ENCODE measurements at regions of chr19 and their contacts with region 1.

Region 1: DNA sequence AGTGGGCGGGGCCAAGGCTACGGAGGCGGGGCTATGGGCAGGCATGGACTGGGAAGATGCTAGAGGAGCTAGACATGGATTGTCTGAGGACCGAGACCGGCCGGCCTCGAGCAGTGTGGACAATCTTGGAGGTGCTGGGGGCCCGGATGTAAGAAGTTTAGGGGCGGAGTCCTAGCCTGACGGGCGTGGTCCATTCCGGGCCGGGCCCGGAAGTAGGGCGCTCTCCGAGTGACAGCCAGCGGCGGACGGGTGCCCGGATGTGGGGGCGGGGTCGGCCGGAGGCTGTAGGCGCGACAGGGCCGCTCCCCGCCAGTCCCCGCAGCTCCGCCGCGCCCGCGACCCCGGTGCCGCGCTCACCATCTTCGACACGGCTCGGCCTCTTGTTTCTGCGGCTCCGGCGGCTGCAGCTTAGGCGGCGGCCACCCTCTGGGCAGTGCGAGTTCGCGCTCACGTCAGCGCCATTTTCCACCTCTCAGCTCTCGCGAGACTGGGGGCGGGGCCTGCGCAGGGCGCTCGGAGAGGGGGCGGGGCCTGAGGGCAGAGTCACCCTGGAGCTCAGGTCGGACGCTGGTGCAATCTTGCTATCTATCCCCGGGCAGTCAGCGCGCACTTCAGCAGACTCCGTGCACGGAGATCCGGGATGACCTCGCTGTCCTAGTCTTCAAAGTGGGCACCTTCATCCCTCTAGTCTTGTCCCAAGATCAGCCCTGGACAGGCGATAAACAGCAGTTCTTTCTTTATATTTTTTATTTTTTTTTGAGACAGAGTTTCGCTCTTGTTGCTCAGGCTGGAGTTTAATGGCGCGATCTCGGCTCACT is at the start of gene ZNF414:
- DNase-seq: peak; percentile 99
- ATAC-seq: peak; percentile 81
- H3K4me3 Mint-ChIP-seq: peak within 1 kb of the TSS; percentile 81
- H3K27ac Mint-ChIP-seq: peak within 1 kb of the TSS; percentile 97
- H3K4me1 Mint-ChIP-seq: peaks cover 55% of the 10 kb centered on the region
- H3K27me3 Mint-ChIP-seq: no peaks in the 10 kb centered on the region
- total RNA-seq, gene ZNF414: 21.0 to 23.7 TPM

Region 2: DNA sequence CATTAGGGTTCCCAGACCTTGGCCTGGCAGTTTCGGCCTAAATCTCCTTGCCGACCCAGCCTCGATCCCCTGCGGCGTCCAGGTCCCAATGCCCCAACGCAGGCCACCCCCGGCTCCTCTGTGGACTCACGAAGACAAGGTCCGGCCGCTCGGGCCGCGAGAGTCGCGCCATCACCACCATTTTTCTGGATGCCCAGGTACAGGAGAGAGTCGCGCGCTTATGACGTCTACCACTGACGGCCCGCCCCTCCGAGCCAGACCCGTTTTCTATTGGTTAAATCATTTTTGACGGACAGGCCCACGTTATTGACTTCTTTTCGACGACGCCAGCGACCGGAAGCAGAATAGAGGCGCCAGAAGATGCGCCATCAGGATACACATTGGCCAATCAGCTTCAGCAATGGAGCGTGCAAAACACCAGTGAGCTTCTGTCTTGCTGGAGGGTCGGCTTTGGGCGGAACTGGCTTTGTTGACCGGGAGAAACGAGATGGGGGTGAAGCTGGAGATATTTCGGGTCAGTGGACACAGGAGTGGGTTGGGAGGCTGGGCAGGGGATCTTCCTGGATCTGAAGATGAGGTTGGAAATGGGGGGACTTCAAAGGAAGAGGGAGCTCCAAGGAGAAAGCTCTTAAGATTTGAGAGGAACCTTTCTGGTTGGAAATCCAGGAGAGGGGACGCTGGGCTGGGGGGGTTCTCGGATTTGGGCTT is 884.4 kb before region 1 on chr19 and contains the starts of genes PET100 and XAB2:
- CTCF ChIA-PET with region 1: no interaction called
- POLR2A ChIA-PET with region 1: no interaction called
- intact Hi-C with region 1: loop called in 1 of 2 experiments (anchors 2 kb)
- DNase-seq: peak; percentile 97
- ATAC-seq: peak; percentile 99
- H3K4me3 Mint-ChIP-seq: peak within 1 kb of the TSS; percentile 88
- H3K27ac Mint-ChIP-seq: peak within 1 kb of the TSS; percentile 97
- H3K4me1 Mint-ChIP-seq: peaks cover 32% of the 10 kb centered on the region
- H3K27me3 Mint-ChIP-seq: no peaks in the 10 kb centered on the region
- total RNA-seq, gene PET100: 45.1 to 99.4 TPM
- total RNA-seq, gene XAB2: 45.9 to 48.3 TPM

Region 3: GRCh38 chr19:7799640-7800355 is 714.1 kb before region 1 on chr19:
- CTCF ChIA-PET with region 1: no interaction called
- POLR2A ChIA-PET with region 1: no interaction called
- intact Hi-C with region 1: no loop called
- DNase-seq: peak; percentile 73
- ATAC-seq: peak; percentile 63
- H3K4me3 Mint-ChIP-seq: peak overlapping the region; percentile 21
- H3K27ac Mint-ChIP-seq: no peak overlapping the region
- H3K4me1 Mint-ChIP-seq: peaks cover 8% of the 10 kb centered on the region
- H3K27me3 Mint-ChIP-seq: peaks cover 32% of the 10 kb centered on the region

Region 4: GRCh38 chr19:8050274-8051096 is 463.4 kb before region 1 on chr19:
- CTCF ChIA-PET with region 1: no interaction called
- POLR2A ChIA-PET with region 1: no interaction called
- intact Hi-C with region 1: loop called in 1 of 2 experiments (anchors 2 kb)
- DNase-seq: peak; percentile 98
- ATAC-seq: peak; percentile 99
- H3K4me3 Mint-ChIP-seq: peak overlapping the region; percentile 36
- H3K27ac Mint-ChIP-seq: no peak overlapping the region
- H3K4me1 Mint-ChIP-seq: peaks cover 11% of the 10 kb centered on the region
- H3K27me3 Mint-ChIP-seq: peaks cover 4% of the 10 kb centered on the region

Region 5: DNA sequence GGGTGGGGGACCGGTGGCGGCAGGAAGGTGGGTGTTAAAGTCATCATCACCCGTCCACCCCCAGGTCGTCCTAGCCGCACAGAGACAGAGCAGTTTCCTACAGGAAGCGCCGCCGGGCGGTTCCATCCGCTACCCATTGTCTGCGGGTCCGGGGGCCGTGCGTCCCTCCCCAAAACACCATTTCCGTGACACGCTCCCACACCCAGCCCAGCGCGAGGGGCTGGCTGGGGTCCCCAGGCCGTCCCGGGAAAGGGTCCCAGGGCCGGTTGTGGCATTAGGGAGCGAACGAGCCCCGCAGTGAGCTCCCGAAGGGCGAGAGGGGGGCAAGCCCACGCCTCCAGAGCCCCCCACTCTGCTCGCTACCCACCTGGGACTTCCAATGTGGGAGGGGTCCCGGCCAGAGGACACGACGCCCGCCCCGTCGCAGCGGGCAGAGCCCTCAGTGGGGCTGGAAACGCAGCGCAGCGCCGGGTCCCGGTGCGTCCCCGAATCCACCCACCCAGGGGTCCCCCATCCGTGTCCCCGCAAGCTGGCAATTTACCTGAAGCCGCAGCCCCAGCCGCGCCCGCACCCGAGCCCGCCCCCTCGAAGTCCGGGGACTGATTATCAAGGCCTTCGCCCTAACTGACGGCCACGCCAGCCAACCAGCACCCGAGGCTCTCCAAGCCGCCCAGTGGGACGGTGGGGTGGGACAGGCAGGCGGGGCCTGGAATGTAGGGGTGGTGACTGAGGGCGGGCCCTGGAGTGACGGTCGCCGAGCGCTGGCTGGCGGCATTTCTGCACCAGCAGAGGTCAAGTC is 171.0 kb before region 1 on chr19 and contains the start of gene KANK3:
- CTCF ChIA-PET with region 1: no interaction called
- POLR2A ChIA-PET with region 1: interaction called, 5 read pairs
- intact Hi-C with region 1: loop called in 1 of 2 experiments (anchors 5 kb)
- DNase-seq: peak; percentile 96
- ATAC-seq: peak; percentile 100
- H3K4me3 Mint-ChIP-seq: peak within 1 kb of the TSS; percentile 64
- H3K27ac Mint-ChIP-seq: no peak within 1 kb of the TSS
- H3K4me1 Mint-ChIP-seq: peaks cover 6% of the 10 kb centered on the region
- H3K27me3 Mint-ChIP-seq: peaks cover 12% of the 10 kb centered on the region
- total RNA-seq, gene KANK3: 0.98 to 1.1 TPM

Region 6: GRCh38 chr19:8444645-8445487 is 69.0 kb before region 1 on chr19 and contains the start of gene HNRNPM:
- CTCF ChIA-PET with region 1: interaction called, 6 read pairs
- POLR2A ChIA-PET with region 1: interaction called, 9 read pairs
- intact Hi-C with region 1: loop called (anchors 1 to 2 kb)
- DNase-seq: peak; percentile 100
- ATAC-seq: peak; percentile 93
- H3K4me3 Mint-ChIP-seq: peak within 1 kb of the TSS; percentile 94
- H3K27ac Mint-ChIP-seq: peak within 1 kb of the TSS; percentile 97
- H3K4me1 Mint-ChIP-seq: peaks cover 39% of the 10 kb centered on the region
- H3K27me3 Mint-ChIP-seq: no peaks in the 10 kb centered on the region
- total RNA-seq, gene HNRNPM: 250 to 304 TPM

Region 7: GRCh38 chr19:8569066-8569771 is 55.3 kb after region 1 on chr19:
- CTCF ChIA-PET with region 1: interaction called, 5 read pairs
- POLR2A ChIA-PET with region 1: interaction called, 3 read pairs
- intact Hi-C with region 1: loop called in 1 of 2 experiments (anchors 1 kb)
- DNase-seq: peak; percentile 79
- ATAC-seq: peak; percentile 79
- H3K4me3 Mint-ChIP-seq: peak overlapping the region; percentile 27
- H3K27ac Mint-ChIP-seq: peak overlapping the region; percentile 88
- H3K4me1 Mint-ChIP-seq: peaks cover 60% of the 10 kb centered on the region
- H3K27me3 Mint-ChIP-seq: no peaks in the 10 kb centered on the region

Region 8: GRCh38 chr19:8592231-8593009 is 78.5 kb after region 1 on chr19:
- CTCF ChIA-PET with region 1: interaction called, 3 read pairs
- POLR2A ChIA-PET with region 1: interaction called, 3 read pairs
- intact Hi-C with region 1: loop called in 1 of 2 experiments (anchors 1 kb)
- DNase-seq: peak; percentile 99
- ATAC-seq: peak; percentile 94
- H3K4me3 Mint-ChIP-seq: peak overlapping the region; percentile 70
- H3K27ac Mint-ChIP-seq: no peak overlapping the region
- H3K4me1 Mint-ChIP-seq: peaks cover 15% of the 10 kb centered on the region
- H3K27me3 Mint-ChIP-seq: no peaks in the 10 kb centered on the region

Region 9: GRCh38 chr19:8641908-8642547 is 128.1 kb after region 1 on chr19:
- CTCF ChIA-PET with region 1: no interaction called
- POLR2A ChIA-PET with region 1: no interaction called
- intact Hi-C with region 1: no loop called
- DNase-seq: no peak
- ATAC-seq: peak; percentile 57
- H3K4me3 Mint-ChIP-seq: no peak overlapping the region
- H3K27ac Mint-ChIP-seq: no peak overlapping the region
- H3K4me1 Mint-ChIP-seq: peaks cover 3% of the 10 kb centered on the region
- H3K27me3 Mint-ChIP-seq: peaks cover 8% of the 10 kb centered on the region

Region 10: DNA sequence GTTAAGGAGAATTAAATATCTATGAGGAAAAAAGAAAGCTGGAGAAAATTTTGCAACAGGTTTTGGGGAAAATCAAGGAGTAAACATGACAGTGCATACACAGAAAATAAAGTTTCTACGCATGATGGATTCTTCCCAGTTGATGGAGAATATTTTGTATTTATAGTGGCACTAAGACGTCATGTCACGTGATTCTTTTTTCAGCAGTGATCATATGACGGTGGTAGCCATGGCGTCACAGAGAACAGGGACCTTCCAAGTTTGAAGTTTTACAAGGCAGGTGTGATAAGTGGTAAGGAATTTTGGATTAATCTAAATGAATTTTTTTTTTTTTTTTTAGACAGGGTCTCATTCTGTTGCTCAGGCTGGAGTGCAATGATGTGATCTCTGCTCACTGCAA is 326.8 kb after region 1 on chr19:
- CTCF ChIA-PET with region 1: no interaction called
- POLR2A ChIA-PET with region 1: no interaction called
- intact Hi-C with region 1: no loop called
- DNase-seq: no peak
- ATAC-seq: no peak
- H3K4me3 Mint-ChIP-seq: no peak overlapping the region
- H3K27ac Mint-ChIP-seq: no peak overlapping the region
- H3K4me1 Mint-ChIP-seq: no peaks in the 10 kb centered on the region
- H3K27me3 Mint-ChIP-seq: peaks cover 9% of the 10 kb centered on the region